PC-3 (cell line): ENCODE measurements at regions of chr2 and their contacts with region 1.

Region 1: GRCh38 chr2:159968279-159968900 is 94.0 kb downstream of the PLA2R1 start:
- DNase-seq: peak; percentile 74
- ATAC-seq: peak; percentile 96
- H3K4me3 ChIP-seq: no peak overlapping the region
- H3K27ac ChIP-seq: no peak overlapping the region
- H3K4me1 ChIP-seq: no peaks in the 10 kb centered on the region
- H3K27me3 ChIP-seq: no peaks in the 10 kb centered on the region
- CTCF ChIP-seq: peak; percentile 80

Region 2: DNA sequence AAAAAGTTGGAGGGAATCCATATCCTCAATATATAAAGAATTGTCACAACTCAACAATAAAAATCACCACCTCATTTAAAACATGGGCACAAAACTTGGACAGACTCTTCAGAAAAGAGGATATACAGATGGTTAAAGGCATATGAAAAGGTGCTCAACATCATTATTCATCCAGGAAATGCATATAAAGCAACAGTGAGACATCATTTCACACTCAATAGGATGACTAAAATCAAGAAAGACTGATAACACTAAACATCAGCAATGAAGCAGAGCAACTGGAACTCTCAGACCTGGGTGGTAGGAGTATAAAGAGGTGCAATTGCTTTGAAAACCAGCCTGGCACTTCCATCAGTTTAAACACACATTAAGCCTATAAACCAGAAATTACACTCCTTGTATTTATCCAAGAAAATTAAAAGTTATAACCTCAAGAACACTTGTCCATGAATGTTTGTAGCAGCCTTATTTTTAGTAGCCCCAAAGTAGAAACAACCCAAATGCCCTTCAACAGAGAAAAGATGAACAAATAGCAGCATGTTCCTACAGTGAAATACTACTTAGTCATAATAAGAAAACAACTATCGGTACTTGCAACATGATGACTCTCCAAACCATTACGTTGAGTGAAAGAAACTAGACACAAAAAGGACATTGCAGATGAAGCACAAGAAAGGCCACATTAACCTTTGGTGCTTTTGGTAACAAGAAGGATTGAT is 1079.1 kb before region 1 on chr2:
- CTCF ChIA-PET with region 1: no interaction called
- POLR2A ChIA-PET with region 1: no interaction called
- intact Hi-C with region 1: loop called (anchors 10 kb)
- DNase-seq: peak; percentile 33
- ATAC-seq: no peak
- H3K4me3 ChIP-seq: no peak overlapping the region
- H3K27ac ChIP-seq: peak overlapping the region; percentile 55
- H3K4me1 ChIP-seq: peaks cover 35% of the 10 kb centered on the region
- H3K27me3 ChIP-seq: no peaks in the 10 kb centered on the region
- CTCF ChIP-seq: no peak

Region 3: GRCh38 chr2:159807183-159808031 is 161.0 kb before region 1 on chr2:
- CTCF ChIA-PET with region 1: no interaction called
- POLR2A ChIA-PET with region 1: no interaction called
- intact Hi-C with region 1: loop called (anchors 2 kb)
- DNase-seq: peak; percentile 76
- ATAC-seq: peak; percentile 71
- H3K4me3 ChIP-seq: no peak overlapping the region
- H3K27ac ChIP-seq: no peak overlapping the region
- H3K4me1 ChIP-seq: no peaks in the 10 kb centered on the region
- H3K27me3 ChIP-seq: no peaks in the 10 kb centered on the region
- CTCF ChIP-seq: peak; percentile 87

Region 4: GRCh38 chr2:159946326-159946999 is 21.9 kb before region 1 on chr2:
- CTCF ChIA-PET with region 1: no interaction called
- POLR2A ChIA-PET with region 1: no interaction called
- intact Hi-C with region 1: loop called (anchors 2 kb)
- DNase-seq: peak; percentile 89
- ATAC-seq: peak; percentile 90
- H3K4me3 ChIP-seq: 0 out of 2 replicates have a peak overlapping the region, but pooled peaks have one; percentile 2
- H3K27ac ChIP-seq: peak overlapping the region; percentile 68
- H3K4me1 ChIP-seq: peaks cover 25% of the 10 kb centered on the region
- H3K27me3 ChIP-seq: no peaks in the 10 kb centered on the region
- CTCF ChIP-seq: no peak

Region 5: DNA sequence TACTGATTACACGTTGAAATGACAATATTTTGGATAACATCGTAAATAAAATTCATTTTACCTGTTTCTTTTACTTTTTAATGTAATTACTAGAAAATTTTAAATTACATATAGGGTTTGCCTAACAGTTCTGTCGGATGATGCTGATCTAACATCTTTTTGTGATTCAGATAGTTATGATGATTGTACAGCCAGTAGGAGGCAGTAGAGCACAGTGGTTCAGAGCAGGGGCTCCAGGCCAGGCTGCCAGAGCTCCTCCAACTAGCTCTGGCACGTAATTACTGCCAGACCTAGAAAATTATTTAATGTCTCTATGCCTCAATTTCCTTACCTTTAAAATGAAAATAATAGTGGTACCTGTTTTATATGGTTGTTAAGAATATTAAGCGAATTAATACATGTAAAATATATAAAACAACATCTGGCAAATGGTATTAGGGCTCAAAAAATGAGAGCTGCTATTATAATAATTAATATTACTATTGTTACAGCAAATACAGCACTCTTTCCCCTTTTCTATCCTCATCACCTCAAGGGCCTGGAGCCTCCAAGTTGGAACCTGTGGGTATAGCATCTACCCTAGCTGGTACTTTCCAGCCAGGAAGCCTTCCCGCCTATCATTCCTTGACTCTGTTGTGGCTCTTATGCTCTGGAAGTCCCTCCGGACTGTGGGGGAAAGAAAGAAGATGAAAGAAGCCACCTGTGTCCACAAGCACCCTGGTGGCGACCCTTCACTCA is 141.7 kb after region 1 on chr2:
- CTCF ChIA-PET with region 1: no interaction called
- POLR2A ChIA-PET with region 1: no interaction called
- intact Hi-C with region 1: no loop called
- DNase-seq: peak; percentile 86
- ATAC-seq: peak; percentile 92
- H3K4me3 ChIP-seq: no peak overlapping the region
- H3K27ac ChIP-seq: no peak overlapping the region
- H3K4me1 ChIP-seq: peaks cover 7% of the 10 kb centered on the region; the same call in 1 of the 2 replicates
- H3K27me3 ChIP-seq: no peaks in the 10 kb centered on the region
- CTCF ChIP-seq: peak; percentile 91